Dorsolateral prefrontal cortex (tissue), 120 donors: ENCODE measurements at regions of chr7 and their contacts with region 1.

Region 1: GRCh38 chr7:154503962-154504550 is 451.9 kb downstream of the DPP6 start:
- DNase-seq: no peak
- H3K4me3 ChIP-seq: peak overlapping the region in 1 of 59 donors; percentile 10
- H3K27ac ChIP-seq: no peak overlapping the region
- H3K27me3 ChIP-seq: no peaks in the 10 kb centered on the region
- CTCF ChIP-seq: peak; percentile 59 to 91 (median 78)

Region 2: DNA sequence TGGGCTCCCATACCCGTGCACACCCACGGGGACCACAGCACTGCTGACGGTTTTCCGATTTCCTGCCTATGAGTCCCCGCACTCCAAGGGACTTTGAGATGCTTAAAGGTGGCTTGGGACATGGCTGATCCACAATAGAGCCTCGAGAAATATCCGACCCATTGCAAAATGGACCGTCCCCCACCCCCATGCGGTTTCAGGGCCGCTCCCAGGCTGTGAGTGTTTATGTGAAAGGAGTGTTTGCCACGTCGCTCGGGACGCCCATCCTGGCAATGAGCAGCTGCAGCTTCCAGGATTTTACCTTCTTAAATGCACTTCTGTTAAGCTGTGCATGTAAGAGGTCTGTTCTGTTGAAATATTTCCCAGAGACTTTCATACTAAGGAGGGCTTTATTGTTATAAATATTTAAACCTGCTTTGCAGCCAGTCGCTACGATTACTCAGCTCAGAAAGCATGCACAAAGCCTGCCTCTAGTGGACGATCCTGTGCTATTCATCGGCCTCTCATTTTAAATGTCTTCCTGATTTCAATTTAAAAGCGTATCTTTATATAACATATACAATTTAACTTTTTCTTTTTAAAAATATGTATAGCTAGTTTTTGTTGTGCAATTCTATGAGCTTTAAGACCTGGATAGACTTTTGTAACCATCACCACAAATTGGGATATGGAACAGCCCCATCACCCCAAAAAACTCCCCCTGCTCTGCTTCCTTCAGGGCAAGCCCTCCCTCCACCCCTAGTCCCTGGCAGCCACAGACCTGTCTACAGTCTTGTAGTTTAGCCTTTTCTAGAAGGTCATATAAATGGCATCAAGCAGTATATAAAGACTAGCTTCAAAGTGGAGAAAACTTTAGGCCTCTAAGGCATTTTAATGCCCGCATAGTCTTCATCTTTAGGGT is 80.5 kb after region 1 on chr7:
- intact Hi-C with region 1: loop called in 1 of 2 experiments (anchors 5 kb)
- DNase-seq: peak in 3 of 10 donors; percentile 39 to 67 (median 55)
- H3K4me3 ChIP-seq: peak overlapping the region in 46 of 59 donors; percentile 7 to 59 (median 36)
- H3K27ac ChIP-seq: peak overlapping the region in 49 of 59 donors; percentile 1 to 79 (median 51)
- H3K27me3 ChIP-seq: no peaks in the 10 kb centered on the region
- CTCF ChIP-seq: peak; percentile 50 to 88 (median 72)